HepG2 (cell line): ENCODE measurements at regions of chr1 and their contacts with region 1.

Region 1: GRCh38 chr1:203166566-203166940 is 9.1 kb downstream of the MYBPH start:
- DNase-seq: peak; percentile 42
- ATAC-seq: peak; percentile 95
- H3K4me3 ChIP-seq: no peak overlapping the region
- H3K27ac ChIP-seq: no peak overlapping the region
- H3K4me1 ChIP-seq: no peaks in the 10 kb centered on the region
- H3K27me3 ChIP-seq: peaks cover 1 to 6% of the 10 kb centered on the region in 2 experiments; a peak in 2 of 5 replicates
- CTCF ChIP-seq: peak; percentile 73
- EP300 ChIP-seq: no peak
- POLR2A ChIP-seq: no peak
- RAD21 ChIP-seq: peak; percentile 56

Region 2: GRCh38 chr1:202752774-202753173 is 413.8 kb before region 1 on chr1:
- CTCF ChIA-PET with region 1: no interaction called
- POLR2A ChIA-PET with region 1: no interaction called
- in situ Hi-C with region 1: no loop called
- intact Hi-C with region 1: no loop called
- DNase-seq: no peak
- ATAC-seq: no peak
- H3K4me3 ChIP-seq: no peak overlapping the region
- H3K27ac ChIP-seq: no peak overlapping the region
- H3K4me1 ChIP-seq: no peaks in the 10 kb centered on the region
- H3K27me3 ChIP-seq: no peaks in the 10 kb centered on the region; a peak in 1 of 5 replicates
- CTCF ChIP-seq: no peak
- EP300 ChIP-seq: no peak
- POLR2A ChIP-seq: no peak
- RAD21 ChIP-seq: no peak

Region 3: GRCh38 chr1:203059334-203059884 is 107.1 kb before region 1 on chr1:
- CTCF ChIA-PET with region 1: no interaction called
- POLR2A ChIA-PET with region 1: no interaction called
- in situ Hi-C with region 1: no loop called
- intact Hi-C with region 1: no loop called
- DNase-seq: no peak
- ATAC-seq: no peak
- H3K4me3 ChIP-seq: no peak overlapping the region
- H3K27ac ChIP-seq: no peak overlapping the region
- H3K4me1 ChIP-seq: peaks cover 10% of the 10 kb centered on the region
- H3K27me3 ChIP-seq: peaks cover 0 to 6% of the 10 kb centered on the region in 2 experiments; a peak in 3 of 5 replicates
- CTCF ChIP-seq: no peak
- EP300 ChIP-seq: no peak
- POLR2A ChIP-seq: no peak
- RAD21 ChIP-seq: no peak

Region 4: GRCh38 chr1:203216274-203217138 is 50.0 kb after region 1 on chr1:
- CTCF ChIA-PET with region 1: interaction called, 15 read pairs
- POLR2A ChIA-PET with region 1: no interaction called
- in situ Hi-C with region 1: loop called (anchors 5 kb)
- intact Hi-C with region 1: loop called (anchors 1 kb)
- DNase-seq: peak; percentile 53
- ATAC-seq: peak; percentile 84
- H3K4me3 ChIP-seq: no peak overlapping the region
- H3K27ac ChIP-seq: no peak overlapping the region
- H3K4me1 ChIP-seq: peaks cover 5% of the 10 kb centered on the region
- H3K27me3 ChIP-seq: peaks cover 0 to 22% of the 10 kb centered on the region in 2 experiments; a peak in 3 of 5 replicates
- CTCF ChIP-seq: peak; percentile 85
- EP300 ChIP-seq: no peak
- POLR2A ChIP-seq: no peak
- RAD21 ChIP-seq: peak; percentile 71; the same call in 1 of the 2 replicates

Region 5: GRCh38 chr1:203267347-203267846 is 100.8 kb after region 1 on chr1:
- CTCF ChIA-PET with region 1: interaction called, 3 read pairs
- POLR2A ChIA-PET with region 1: no interaction called
- in situ Hi-C with region 1: no loop called
- intact Hi-C with region 1: loop called (anchors 2 kb)
- DNase-seq: peak; percentile 72
- ATAC-seq: peak; percentile 80
- H3K4me3 ChIP-seq: peak overlapping the region; percentile 56 to 82 (median 70); a peak in 5 of 6 replicates
- H3K27ac ChIP-seq: no peak overlapping the region
- H3K4me1 ChIP-seq: 0 out of 2 replicates have a peak, but pooled peaks cover 5% of the 10 kb centered on the region
- H3K27me3 ChIP-seq: peaks cover 0 to 3% of the 10 kb centered on the region in 2 experiments; a peak in 3 of 5 replicates
- CTCF ChIP-seq: peak; percentile 80
- EP300 ChIP-seq: no peak
- POLR2A ChIP-seq: no peak
- RAD21 ChIP-seq: no peak